Tibial artery (tissue), 4 donors: ENCODE measurements at regions of chr6 and their contacts with region 1.

Region 1: GRCh38 chr6:148186916-148187315 is 155.7 kb upstream of the SASH1 start:
- DNase-seq: no peak
- H3K4me3 ChIP-seq: no peak overlapping the region
- H3K27ac ChIP-seq: no peak overlapping the region
- H3K4me1 ChIP-seq: peaks cover 0 to 5% (median 2%) of the 10 kb centered on the region in 4 donors
- H3K27me3 ChIP-seq: no peaks in the 10 kb centered on the region
- CTCF ChIP-seq: no peak

Region 2: DNA sequence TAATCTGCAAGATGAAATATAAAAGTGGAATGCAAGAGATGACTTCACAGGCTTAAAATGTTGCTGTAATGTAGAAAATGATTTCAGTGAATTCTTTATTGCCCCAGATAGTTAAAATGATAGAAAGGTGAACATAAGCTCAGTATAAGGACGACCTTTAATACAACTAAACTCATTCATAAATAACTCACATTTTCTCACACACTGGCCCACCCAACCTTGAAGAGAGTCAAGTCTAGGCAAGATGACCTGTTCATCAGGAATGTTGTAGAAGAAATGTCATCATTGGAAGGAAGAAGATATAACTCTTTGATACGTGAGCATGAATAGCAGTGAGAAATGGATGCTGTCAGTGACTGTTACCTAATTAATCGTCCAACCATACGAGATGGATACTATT is 44.7 kb after region 1 on chr6:
- intact Hi-C with region 1: no loop called
- DNase-seq: no peak
- H3K4me3 ChIP-seq: no peak overlapping the region
- H3K27ac ChIP-seq: no peak overlapping the region
- H3K4me1 ChIP-seq: no peaks in the 10 kb centered on the region
- H3K27me3 ChIP-seq: no peaks in the 10 kb centered on the region
- CTCF ChIP-seq: no peak

Region 3: GRCh38 chr6:148244217-148244935 is 57.5 kb after region 1 on chr6:
- intact Hi-C with region 1: no loop called
- DNase-seq: no peak
- H3K4me3 ChIP-seq: no peak overlapping the region
- H3K27ac ChIP-seq: peak overlapping the region; percentile 72 to 79
- H3K4me1 ChIP-seq: peaks cover 0 to 91% (median 51%) of the 10 kb centered on the region in 4 donors
- H3K27me3 ChIP-seq: no peaks in the 10 kb centered on the region
- CTCF ChIP-seq: no peak

Region 4: DNA sequence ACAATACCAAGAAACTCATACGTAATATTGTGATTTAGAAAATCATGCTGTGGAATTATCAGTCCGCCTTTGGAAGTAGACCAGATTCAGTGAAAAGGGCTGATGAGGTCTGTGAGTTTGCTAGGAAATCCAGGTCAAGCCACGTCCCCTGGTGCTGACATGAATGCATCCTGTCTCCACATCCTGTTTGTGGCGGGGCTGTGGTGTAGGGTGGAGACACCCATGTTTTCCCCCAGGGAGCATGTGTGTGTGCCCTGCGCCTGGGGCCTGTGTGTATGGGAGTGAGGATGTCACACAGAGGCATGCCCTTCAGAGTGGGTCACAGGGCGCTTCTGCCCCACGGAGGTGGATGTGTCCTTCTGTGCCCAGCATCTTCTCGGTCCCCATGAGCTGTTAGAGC is 264.8 kb after region 1 on chr6:
- intact Hi-C with region 1: loop called (anchors 5 kb)
- DNase-seq: no peak
- H3K4me3 ChIP-seq: no peak overlapping the region
- H3K27ac ChIP-seq: no peak overlapping the region
- H3K4me1 ChIP-seq: no peaks in the 10 kb centered on the region
- H3K27me3 ChIP-seq: no peaks in the 10 kb centered on the region
- CTCF ChIP-seq: no peak